ENCODE measurements at regions of chr13 and their contacts with region 1.

Region 1: GRCh38 chr13:74770361-74770760 is 636.2 kb upstream of the KLF12 start:
- DNase-seq: peak; percentile 94
- ATAC-seq: peak; percentile 60
- H3K4me3 ChIP-seq: no peak overlapping the region
- H3K27ac ChIP-seq: peak overlapping the region; percentile 37; the same call in 1 of the 2 replicates
- H3K4me1 ChIP-seq: peaks cover 11% of the 10 kb centered on the region
- H3K27me3 ChIP-seq: no peaks in the 10 kb centered on the region
- CTCF ChIP-seq: no peak
- POLR2A ChIP-seq: no peak
- RAD21 ChIP-seq: no peak

Region 2: GRCh38 chr13:74210693-74211393 is 559.5 kb before region 1 on chr13:
- CTCF ChIA-PET with region 1: no interaction called
- POLR2A ChIA-PET with region 1: no interaction called
- dilution Hi-C with region 1: no loop called
- in situ Hi-C with region 1: no loop called
- intact Hi-C with region 1: loop called (anchors 5 kb)
- DNase-seq: peak; percentile 98
- ATAC-seq: peak; percentile 92
- H3K4me3 ChIP-seq: peak overlapping the region; percentile 4; the same call in 1 of the 2 replicates
- H3K27ac ChIP-seq: peak overlapping the region; percentile 79
- H3K4me1 ChIP-seq: peaks cover 14% of the 10 kb centered on the region
- H3K27me3 ChIP-seq: no peaks in the 10 kb centered on the region
- CTCF ChIP-seq: no peak
- POLR2A ChIP-seq: no peak
- RAD21 ChIP-seq: peak; percentile 9; the same call in 1 of the 2 replicates

Region 3: GRCh38 chr13:74325106-74325505 is 445.3 kb before region 1 on chr13:
- CTCF ChIA-PET with region 1: no interaction called
- POLR2A ChIA-PET with region 1: no interaction called
- dilution Hi-C with region 1: no loop called
- in situ Hi-C with region 1: no loop called
- intact Hi-C with region 1: loop called (anchors 10 kb)
- DNase-seq: peak; percentile 87
- ATAC-seq: peak; percentile 92
- H3K4me3 ChIP-seq: no peak overlapping the region
- H3K27ac ChIP-seq: 0 out of 2 replicates have a peak overlapping the region, but pooled peaks have one; percentile 6
- H3K4me1 ChIP-seq: no peaks in the 10 kb centered on the region
- H3K27me3 ChIP-seq: 0 out of 2 replicates have a peak, but pooled peaks cover 2% of the 10 kb centered on the region
- CTCF ChIP-seq: no peak
- POLR2A ChIP-seq: no peak
- RAD21 ChIP-seq: no peak

Region 4: DNA sequence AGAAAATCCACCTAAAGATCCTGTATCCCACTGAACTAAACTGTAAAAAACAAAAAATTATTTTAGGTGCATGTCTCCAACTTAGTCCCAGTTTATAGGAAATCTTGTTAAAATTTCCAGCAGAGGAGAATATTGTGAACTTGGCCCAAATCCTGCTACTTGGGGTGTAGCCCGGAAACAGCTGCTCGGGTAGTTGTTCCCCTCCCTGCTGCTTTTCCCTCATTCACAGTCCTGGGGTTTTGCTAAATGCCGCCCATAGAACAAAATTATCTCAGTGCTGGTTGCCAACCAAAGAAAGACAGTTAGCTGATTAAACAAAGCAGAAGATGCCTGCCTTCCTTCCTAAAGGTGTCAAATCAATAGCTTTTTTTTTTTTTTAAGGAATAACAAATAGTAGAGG is 305.7 kb before region 1 on chr13:
- CTCF ChIA-PET with region 1: no interaction called
- POLR2A ChIA-PET with region 1: no interaction called
- dilution Hi-C with region 1: no loop called
- in situ Hi-C with region 1: no loop called
- intact Hi-C with region 1: no loop called
- DNase-seq: no peak
- ATAC-seq: no peak
- H3K4me3 ChIP-seq: no peak overlapping the region
- H3K27ac ChIP-seq: no peak overlapping the region
- H3K4me1 ChIP-seq: no peaks in the 10 kb centered on the region
- H3K27me3 ChIP-seq: peaks cover 6% of the 10 kb centered on the region
- CTCF ChIP-seq: no peak
- POLR2A ChIP-seq: no peak
- RAD21 ChIP-seq: no peak

Region 5: DNA sequence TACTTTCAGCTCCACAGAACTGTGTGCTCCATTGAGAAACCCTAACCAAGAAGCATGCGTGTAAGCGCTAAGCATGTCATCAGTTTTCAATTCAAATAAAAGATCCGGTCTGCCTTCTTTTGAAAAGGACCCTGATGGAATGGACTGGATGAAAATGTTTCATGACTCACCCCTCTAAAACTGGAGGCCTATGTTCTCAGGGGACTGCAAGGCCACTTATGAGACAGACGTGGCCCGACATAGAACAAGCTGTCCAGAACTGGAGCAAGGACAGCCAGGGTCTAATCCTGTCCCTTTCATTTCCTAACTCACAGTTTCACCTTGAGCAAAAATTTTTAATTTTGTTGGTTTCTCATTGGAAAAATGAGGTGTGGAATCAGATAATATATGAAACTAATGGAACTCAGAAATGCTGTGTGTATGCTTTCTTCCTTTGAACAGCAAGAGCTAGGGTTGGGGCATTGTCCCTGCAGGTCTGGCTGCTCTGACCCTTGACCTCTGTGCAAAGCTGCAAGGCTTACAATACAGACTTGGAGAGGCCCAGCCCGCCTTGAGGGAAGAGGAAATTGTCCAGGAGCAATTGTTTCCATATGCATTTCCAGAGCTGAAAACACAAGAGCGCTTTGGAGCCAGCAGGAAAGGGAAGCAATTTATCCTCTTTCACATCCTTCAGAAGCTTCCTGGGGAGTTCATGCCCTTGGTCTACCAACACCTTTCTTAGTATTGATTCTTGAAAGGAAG is 82.7 kb before region 1 on chr13:
- CTCF ChIA-PET with region 1: no interaction called
- POLR2A ChIA-PET with region 1: no interaction called
- dilution Hi-C with region 1: no loop called
- in situ Hi-C with region 1: no loop called
- intact Hi-C with region 1: no loop called
- DNase-seq: no peak
- ATAC-seq: no peak
- H3K4me3 ChIP-seq: no peak overlapping the region
- H3K27ac ChIP-seq: no peak overlapping the region
- H3K4me1 ChIP-seq: no peaks in the 10 kb centered on the region
- H3K27me3 ChIP-seq: no peaks in the 10 kb centered on the region
- CTCF ChIP-seq: no peak
- POLR2A ChIP-seq: no peak
- RAD21 ChIP-seq: no peak

Region 6: DNA sequence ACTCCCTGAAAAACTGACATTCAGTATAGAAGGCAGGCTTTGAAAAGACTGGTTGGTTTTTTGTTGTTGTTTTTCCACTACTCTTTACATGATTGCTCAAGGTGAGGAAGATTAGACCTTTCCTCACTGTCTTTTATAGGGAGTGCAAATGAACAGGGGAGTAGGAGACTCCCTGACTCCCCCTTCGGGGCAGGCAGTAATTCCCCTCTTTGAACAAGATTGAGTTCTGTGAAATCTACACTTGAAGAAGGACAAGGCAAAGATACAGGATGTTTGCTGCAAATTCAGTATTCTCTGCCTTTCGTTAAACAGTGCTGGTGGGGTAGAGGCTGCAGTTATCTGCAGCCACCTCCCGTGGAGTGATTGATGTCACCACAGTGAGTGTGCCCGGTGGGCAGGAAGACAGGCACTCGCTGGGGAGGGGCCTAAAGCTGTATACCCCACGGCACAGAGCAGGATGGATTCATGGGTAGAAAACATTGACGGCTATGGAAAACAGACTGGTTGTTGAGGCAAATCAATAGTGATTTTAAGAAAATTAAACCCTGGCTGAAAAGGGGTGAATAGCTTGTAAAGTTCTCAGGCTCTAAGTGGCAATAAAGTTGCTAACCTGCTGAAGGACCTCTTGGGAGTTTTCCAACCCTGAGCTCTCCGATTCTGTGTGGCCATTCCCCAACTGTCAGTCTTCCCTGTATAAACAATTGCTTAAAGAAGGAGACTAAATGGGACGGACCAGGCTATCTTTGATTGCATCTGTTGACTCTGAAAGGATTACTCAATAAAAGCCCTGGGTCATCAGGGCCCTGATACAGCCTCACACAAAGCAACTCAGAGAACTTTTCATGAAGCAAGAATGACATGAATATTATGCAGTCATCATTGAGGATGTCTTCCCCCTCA is 403.3 kb after region 1 on chr13:
- CTCF ChIA-PET with region 1: no interaction called
- POLR2A ChIA-PET with region 1: no interaction called
- dilution Hi-C with region 1: no loop called
- in situ Hi-C with region 1: no loop called
- intact Hi-C with region 1: no loop called
- DNase-seq: no peak
- ATAC-seq: no peak
- H3K4me3 ChIP-seq: no peak overlapping the region
- H3K27ac ChIP-seq: no peak overlapping the region
- H3K4me1 ChIP-seq: no peaks in the 10 kb centered on the region
- H3K27me3 ChIP-seq: peaks cover 5% of the 10 kb centered on the region; the same call in 1 of the 2 replicates
- CTCF ChIP-seq: no peak
- POLR2A ChIP-seq: no peak
- RAD21 ChIP-seq: no peak

Region 7: GRCh38 chr13:75353781-75354193 is 583.4 kb after region 1 on chr13:
- CTCF ChIA-PET with region 1: no interaction called
- POLR2A ChIA-PET with region 1: no interaction called
- dilution Hi-C with region 1: no loop called
- in situ Hi-C with region 1: no loop called
- intact Hi-C with region 1: no loop called
- DNase-seq: peak; percentile 39
- ATAC-seq: peak; percentile 38
- H3K4me3 ChIP-seq: no peak overlapping the region
- H3K27ac ChIP-seq: no peak overlapping the region
- H3K4me1 ChIP-seq: peaks cover 7% of the 10 kb centered on the region; the same call in 1 of the 2 replicates
- H3K27me3 ChIP-seq: no peaks in the 10 kb centered on the region
- CTCF ChIP-seq: no peak
- POLR2A ChIP-seq: no peak
- RAD21 ChIP-seq: no peak

Region 8: DNA sequence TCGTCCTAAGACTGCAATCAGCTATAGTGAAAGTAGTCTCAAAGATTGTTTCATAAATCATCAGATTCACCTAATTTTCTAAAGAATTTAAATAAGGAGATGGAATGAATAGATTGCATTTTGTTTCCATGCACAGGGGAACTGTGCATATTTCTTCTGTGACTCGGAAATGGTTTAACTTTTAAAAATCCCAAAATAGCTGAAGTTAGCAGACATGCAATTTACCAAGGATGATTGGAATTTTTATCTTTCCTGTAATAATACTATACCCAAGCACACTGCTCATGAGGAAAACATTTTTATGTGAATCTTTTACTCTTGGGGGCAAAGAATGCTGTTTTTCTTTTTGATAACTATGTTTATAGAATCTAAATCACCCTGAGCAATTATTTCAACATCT is 850.8 kb after region 1 on chr13:
- CTCF ChIA-PET with region 1: no interaction called
- POLR2A ChIA-PET with region 1: no interaction called
- dilution Hi-C with region 1: no loop called
- in situ Hi-C with region 1: no loop called
- intact Hi-C with region 1: loop called (anchors 5 kb)
- DNase-seq: peak; percentile 70
- ATAC-seq: peak; percentile 82
- H3K4me3 ChIP-seq: no peak overlapping the region
- H3K27ac ChIP-seq: peak overlapping the region; percentile 92; the same call in 1 of the 2 replicates
- H3K4me1 ChIP-seq: peaks cover 20% of the 10 kb centered on the region
- H3K27me3 ChIP-seq: no peaks in the 10 kb centered on the region
- CTCF ChIP-seq: no peak
- POLR2A ChIP-seq: no peak
- RAD21 ChIP-seq: no peak